ENCODE measurements at regions of chr6 and their contacts with region 1.

Region 1: GRCh38 chr6:145633981-145634627 is 101.2 kb downstream of the EPM2A start:
- DNase-seq: peak; percentile 85
- ATAC-seq: peak; percentile 90
- H3K4me3 Mint-ChIP-seq: no peak overlapping the region
- H3K27ac Mint-ChIP-seq: no peak overlapping the region
- H3K4me1 Mint-ChIP-seq: no peaks in the 10 kb centered on the region
- H3K27me3 Mint-ChIP-seq: no peaks in the 10 kb centered on the region
- CTCF ChIP-seq: peak; percentile 92

Region 2: GRCh38 chr6:145587334-145587733 is 46.8 kb before region 1 on chr6:
- CTCF ChIA-PET with region 1: no interaction called
- POLR2A ChIA-PET with region 1: no interaction called
- intact Hi-C with region 1: no loop called
- DNase-seq: no peak
- ATAC-seq: no peak
- H3K4me3 Mint-ChIP-seq: no peak overlapping the region
- H3K27ac Mint-ChIP-seq: no peak overlapping the region
- H3K4me1 Mint-ChIP-seq: no peaks in the 10 kb centered on the region
- H3K27me3 Mint-ChIP-seq: peaks cover 2% of the 10 kb centered on the region
- CTCF ChIP-seq: no peak

Region 3: GRCh38 chr6:145608850-145609249 is 25.3 kb before region 1 on chr6:
- CTCF ChIA-PET with region 1: interaction called, 10 read pairs
- POLR2A ChIA-PET with region 1: no interaction called
- intact Hi-C with region 1: no loop called
- DNase-seq: no peak
- ATAC-seq: no peak
- H3K4me3 Mint-ChIP-seq: no peak overlapping the region
- H3K27ac Mint-ChIP-seq: no peak overlapping the region
- H3K4me1 Mint-ChIP-seq: no peaks in the 10 kb centered on the region
- H3K27me3 Mint-ChIP-seq: peaks cover 1% of the 10 kb centered on the region
- CTCF ChIP-seq: no peak

Region 4: DNA sequence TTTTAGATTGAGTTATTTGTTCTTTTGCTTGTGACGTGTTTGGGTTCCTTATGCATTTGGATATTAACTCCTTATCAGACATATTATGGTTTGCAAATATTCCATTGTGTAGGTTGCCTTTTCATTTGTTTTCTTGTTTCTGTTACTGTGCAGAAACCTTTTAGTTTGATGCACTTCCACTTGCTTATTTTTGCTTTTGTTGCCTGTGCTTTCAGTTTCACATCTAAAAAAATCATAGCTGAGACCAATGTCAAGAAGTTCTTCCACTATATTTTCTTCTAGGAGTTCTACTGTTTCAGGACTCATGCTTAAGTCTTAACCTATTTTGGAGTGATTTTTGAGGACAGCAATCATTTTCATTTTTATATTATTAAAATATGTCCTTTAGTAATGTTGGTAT is 12.3 kb before region 1 on chr6:
- CTCF ChIA-PET with region 1: interaction called, 16 read pairs
- POLR2A ChIA-PET with region 1: no interaction called
- intact Hi-C with region 1: no loop called
- DNase-seq: no peak
- ATAC-seq: no peak
- H3K4me3 Mint-ChIP-seq: no peak overlapping the region
- H3K27ac Mint-ChIP-seq: no peak overlapping the region
- H3K4me1 Mint-ChIP-seq: no peaks in the 10 kb centered on the region
- H3K27me3 Mint-ChIP-seq: no peaks in the 10 kb centered on the region
- CTCF ChIP-seq: no peak

Region 5: GRCh38 chr6:145660676-145661075 is 26.6 kb after region 1 on chr6:
- CTCF ChIA-PET with region 1: interaction called, 10 read pairs
- POLR2A ChIA-PET with region 1: no interaction called
- intact Hi-C with region 1: no loop called
- DNase-seq: no peak
- ATAC-seq: no peak
- H3K4me3 Mint-ChIP-seq: no peak overlapping the region
- H3K27ac Mint-ChIP-seq: no peak overlapping the region
- H3K4me1 Mint-ChIP-seq: peaks cover 3% of the 10 kb centered on the region
- H3K27me3 Mint-ChIP-seq: no peaks in the 10 kb centered on the region
- CTCF ChIP-seq: no peak

Measured in activated CD8-positive, alpha-beta T cell treated with anti-CD3 and anti-CD28 coated beads for 36 hours (primary cell).